ENCODE measurements at regions of chr19 and their contacts with region 1.

Region 1: GRCh38 chr19:17266975-17267788 is at the start of gene BABAM1:
- DNase-seq: peak; percentile 69 to 99 (median 99)
- ATAC-seq: peak; percentile 96
- H3K4me3 ChIP-seq: peak within 1 kb of the TSS; percentile 84
- H3K4me3 Mint-ChIP-seq: peak within 1 kb of the TSS; percentile 68 to 92 (median 84)
- H3K27ac ChIP-seq: peak within 1 kb of the TSS; percentile 76
- H3K27ac Mint-ChIP-seq: peak within 1 kb of the TSS; percentile 69 to 93 (median 82)
- H3K4me1 ChIP-seq: peaks cover 6 to 18% of the 10 kb centered on the region in 2 donors
- H3K4me1 Mint-ChIP-seq: peaks cover 8 to 30% (median 22%) of the 10 kb centered on the region in 7 donors
- H3K27me3 ChIP-seq: no peaks in the 10 kb centered on the region
- H3K27me3 Mint-ChIP-seq: peaks cover 0 to 2% (median 0%) of the 10 kb centered on the region in 5 donors
- total RNA-seq, gene BABAM1: 72.4 to 111 (median 95.6) TPM

Region 2: GRCh38 chr19:17001603-17002183 is 265.5 kb before region 1 on chr19:
- CTCF ChIA-PET with region 1: no interaction called
- POLR2A ChIA-PET with region 1: no interaction called
- intact Hi-C with region 1: loop called in 1 of 2 experiments (anchors 1 kb)
- DNase-seq: peak; percentile 53 to 96 (median 91)
- ATAC-seq: peak; percentile 99
- H3K4me3 ChIP-seq: peak overlapping the region; percentile 43
- H3K4me3 Mint-ChIP-seq: peak overlapping the region; percentile 66 to 81 (median 76)
- H3K27ac ChIP-seq: peak overlapping the region; percentile 64
- H3K27ac Mint-ChIP-seq: peak overlapping the region; percentile 73 to 95 (median 92)
- H3K4me1 ChIP-seq: peaks cover 21% of the 10 kb centered on the region in 2 donors
- H3K4me1 Mint-ChIP-seq: peaks cover 8 to 35% (median 22%) of the 10 kb centered on the region in 7 donors
- H3K27me3 ChIP-seq: no peaks in the 10 kb centered on the region
- H3K27me3 Mint-ChIP-seq: peaks cover 0 to 3% (median 0%) of the 10 kb centered on the region in 5 donors

Region 3: DNA sequence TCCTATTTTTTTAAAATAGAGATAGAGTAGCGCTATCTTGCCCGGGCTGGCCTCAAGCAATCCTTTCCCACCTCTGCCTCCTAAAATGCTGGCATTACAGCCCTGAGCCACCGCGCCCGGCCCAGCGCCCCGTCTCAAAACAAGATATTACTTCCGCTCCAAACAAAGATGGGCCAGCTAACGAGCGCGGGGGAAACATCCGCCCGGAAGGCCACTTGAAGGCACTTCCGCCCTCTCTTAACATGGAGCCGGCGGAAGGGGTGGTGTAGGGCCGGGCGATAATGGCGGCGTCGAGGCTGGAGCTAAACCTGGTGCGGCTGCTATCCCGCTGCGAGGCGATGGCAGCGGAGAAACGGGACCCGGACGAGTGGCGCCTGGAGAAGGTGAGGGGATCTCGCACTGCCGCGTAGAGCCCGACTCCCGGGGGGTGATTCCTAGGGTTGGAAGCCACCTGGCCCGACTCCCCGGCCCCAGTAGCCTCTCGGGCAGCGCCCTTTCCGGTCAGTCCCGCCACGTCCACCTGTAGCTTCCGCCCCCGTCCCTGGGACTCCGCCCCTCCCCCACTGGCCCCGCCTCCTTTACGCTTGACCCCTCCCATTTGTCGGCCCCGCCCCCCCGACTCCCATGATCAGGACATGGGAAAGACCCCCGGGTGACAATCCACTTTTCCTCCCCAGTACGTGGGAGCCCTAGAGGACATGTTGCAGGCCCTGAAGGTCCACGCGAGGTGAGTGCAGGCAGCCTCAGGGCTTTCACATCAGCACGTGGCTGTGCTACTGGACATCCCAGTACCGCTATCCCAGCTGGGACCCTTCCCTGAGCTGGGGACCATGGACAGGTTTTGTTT is 51.8 kb before region 1 on chr19 and contains the start of gene USE1:
- CTCF ChIA-PET with region 1: interaction called, 4 read pairs
- POLR2A ChIA-PET with region 1: interaction called, 15 read pairs
- intact Hi-C with region 1: loop called (anchors 1 kb)
- DNase-seq: peak; percentile 70 to 91 (median 89)
- ATAC-seq: peak; percentile 97
- H3K4me3 ChIP-seq: peak within 1 kb of the TSS; percentile 92
- H3K4me3 Mint-ChIP-seq: peak within 1 kb of the TSS; percentile 83 to 99 (median 90)
- H3K27ac ChIP-seq: peak within 1 kb of the TSS; percentile 89
- H3K27ac Mint-ChIP-seq: peak within 1 kb of the TSS; percentile 97 to 100 (median 99)
- H3K4me1 ChIP-seq: peaks cover 13 to 16% of the 10 kb centered on the region in 2 donors
- H3K4me1 Mint-ChIP-seq: peaks cover 0 to 16% (median 12%) of the 10 kb centered on the region in 7 donors
- H3K27me3 ChIP-seq: no peaks in the 10 kb centered on the region
- H3K27me3 Mint-ChIP-seq: no peaks in the 10 kb centered on the region
- total RNA-seq, gene USE1: 24.7 to 51.1 (median 30.5) TPM

Region 4: GRCh38 chr19:17235618-17236377 is 31.4 kb before region 1 on chr19:
- CTCF ChIA-PET with region 1: interaction called, 5 read pairs
- POLR2A ChIA-PET with region 1: interaction called, 18 read pairs
- intact Hi-C with region 1: loop called in 1 of 2 experiments (anchors 2 kb)
- DNase-seq: peak; percentile 62 to 75 (median 73)
- ATAC-seq: peak; percentile 95
- H3K4me3 ChIP-seq: peak overlapping the region; percentile 74
- H3K4me3 Mint-ChIP-seq: peak overlapping the region in 9 of 10 donors; percentile 49 to 88 (median 83)
- H3K27ac ChIP-seq: peak overlapping the region; percentile 64
- H3K27ac Mint-ChIP-seq: peak overlapping the region in 1 of 9 donors; percentile 23
- H3K4me1 ChIP-seq: peaks cover 0 to 11% of the 10 kb centered on the region in 2 donors
- H3K4me1 Mint-ChIP-seq: peaks cover 4 to 22% (median 16%) of the 10 kb centered on the region in 7 donors
- H3K27me3 ChIP-seq: no peaks in the 10 kb centered on the region
- H3K27me3 Mint-ChIP-seq: no peaks in the 10 kb centered on the region

Region 5: GRCh38 chr19:17292286-17293097 is 25.3 kb after region 1 on chr19:
- CTCF ChIA-PET with region 1: interaction called, 4 read pairs
- POLR2A ChIA-PET with region 1: interaction called, 4 read pairs
- intact Hi-C with region 1: loop called in 1 of 2 experiments (anchors 1 kb)
- DNase-seq: peak; percentile 71 to 88 (median 79)
- ATAC-seq: peak; percentile 97
- H3K4me3 ChIP-seq: peak overlapping the region; percentile 80
- H3K4me3 Mint-ChIP-seq: peak overlapping the region; percentile 83 to 93 (median 92)
- H3K27ac ChIP-seq: peak overlapping the region; percentile 55
- H3K27ac Mint-ChIP-seq: peak overlapping the region; percentile 33 to 87 (median 77)
- H3K4me1 ChIP-seq: peaks cover 0 to 5% of the 10 kb centered on the region in 2 donors
- H3K4me1 Mint-ChIP-seq: peaks cover 0 to 7% (median 5%) of the 10 kb centered on the region in 7 donors
- H3K27me3 ChIP-seq: no peaks in the 10 kb centered on the region
- H3K27me3 Mint-ChIP-seq: peaks cover 0 to 5% (median 0%) of the 10 kb centered on the region in 5 donors

Region 6: GRCh38 chr19:17336872-17337722 is 69.9 kb after region 1 on chr19 and contains the start of gene GTPBP3:
- CTCF ChIA-PET with region 1: no interaction called
- POLR2A ChIA-PET with region 1: no interaction called
- intact Hi-C with region 1: loop called (anchors 1 kb)
- DNase-seq: peak; percentile 84 to 99 (median 95)
- ATAC-seq: peak; percentile 96
- H3K4me3 ChIP-seq: peak within 1 kb of the TSS; percentile 76
- H3K4me3 Mint-ChIP-seq: peak within 1 kb of the TSS; percentile 86 to 96 (median 92)
- H3K27ac ChIP-seq: peak within 1 kb of the TSS; percentile 79
- H3K27ac Mint-ChIP-seq: peak within 1 kb of the TSS; percentile 78 to 95 (median 93)
- H3K4me1 ChIP-seq: peaks cover 16 to 22% of the 10 kb centered on the region in 2 donors
- H3K4me1 Mint-ChIP-seq: peaks cover 22 to 55% (median 27%) of the 10 kb centered on the region in 7 donors
- H3K27me3 ChIP-seq: no peaks in the 10 kb centered on the region
- H3K27me3 Mint-ChIP-seq: no peaks in the 10 kb centered on the region
- total RNA-seq, gene GTPBP3: 29.6 to 59.8 (median 40.4) TPM

Region 7: DNA sequence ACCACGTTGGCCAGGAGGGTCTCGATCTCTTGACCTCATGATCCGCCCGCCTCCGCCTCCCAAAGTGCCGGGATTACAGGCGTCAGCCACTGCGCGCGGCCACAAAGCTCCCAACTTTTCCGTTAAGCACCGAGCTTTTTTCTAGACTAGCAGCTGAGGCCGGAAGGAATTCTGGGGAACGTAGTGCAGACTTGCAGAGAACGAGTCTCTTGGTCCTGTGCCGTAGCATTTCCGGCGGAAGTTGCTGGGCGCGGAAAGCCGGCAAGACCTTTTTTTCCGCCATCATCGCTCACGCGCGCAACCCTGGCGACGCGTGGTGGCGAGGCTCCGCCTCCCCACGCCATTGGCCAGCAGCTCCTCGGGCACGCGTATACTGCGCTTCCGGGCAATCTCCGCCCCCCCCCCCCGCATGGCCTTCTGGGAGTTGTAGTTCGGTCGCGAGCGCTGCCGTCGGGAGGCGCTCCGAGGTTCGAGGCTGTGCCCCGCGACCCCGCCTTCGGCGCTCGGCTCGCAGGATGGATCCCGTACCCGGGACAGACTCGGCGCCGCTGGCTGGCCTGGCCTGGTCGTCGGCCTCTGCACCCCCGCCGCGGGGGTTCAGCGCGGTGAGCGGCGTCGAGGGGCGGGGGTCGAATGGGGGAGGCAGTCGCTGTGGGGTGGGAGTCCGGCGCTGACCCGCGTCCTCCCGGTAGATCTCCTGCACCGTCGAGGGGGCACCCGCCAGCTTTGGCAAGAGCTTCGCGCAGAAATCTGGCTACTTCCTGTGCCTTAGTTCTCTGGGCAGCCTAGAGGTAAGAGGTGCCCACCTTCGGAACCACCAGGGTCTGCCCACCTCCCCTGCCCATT is 152.7 kb after region 1 on chr19 and contains the start of gene MVB12A:
- CTCF ChIA-PET with region 1: no interaction called
- POLR2A ChIA-PET with region 1: interaction called, 8 read pairs
- intact Hi-C with region 1: loop called in 1 of 2 experiments (anchors 1 kb)
- DNase-seq: peak; percentile 85 to 98 (median 96)
- ATAC-seq: peak; percentile 99
- H3K4me3 ChIP-seq: peak within 1 kb of the TSS; percentile 79
- H3K4me3 Mint-ChIP-seq: peak within 1 kb of the TSS; percentile 87 to 95 (median 91)
- H3K27ac ChIP-seq: peak within 1 kb of the TSS; percentile 70
- H3K27ac Mint-ChIP-seq: peak within 1 kb of the TSS; percentile 73 to 93 (median 89)
- H3K4me1 ChIP-seq: peaks cover 12 to 15% of the 10 kb centered on the region in 2 donors
- H3K4me1 Mint-ChIP-seq: peaks cover 4 to 28% (median 19%) of the 10 kb centered on the region in 7 donors
- H3K27me3 ChIP-seq: no peaks in the 10 kb centered on the region
- H3K27me3 Mint-ChIP-seq: no peaks in the 10 kb centered on the region
- total RNA-seq, gene MVB12A: 19.5 to 45.1 (median 33.3) TPM